ENCODE measurements at regions of chr18 and their contacts with region 1.

Region 1: DNA sequence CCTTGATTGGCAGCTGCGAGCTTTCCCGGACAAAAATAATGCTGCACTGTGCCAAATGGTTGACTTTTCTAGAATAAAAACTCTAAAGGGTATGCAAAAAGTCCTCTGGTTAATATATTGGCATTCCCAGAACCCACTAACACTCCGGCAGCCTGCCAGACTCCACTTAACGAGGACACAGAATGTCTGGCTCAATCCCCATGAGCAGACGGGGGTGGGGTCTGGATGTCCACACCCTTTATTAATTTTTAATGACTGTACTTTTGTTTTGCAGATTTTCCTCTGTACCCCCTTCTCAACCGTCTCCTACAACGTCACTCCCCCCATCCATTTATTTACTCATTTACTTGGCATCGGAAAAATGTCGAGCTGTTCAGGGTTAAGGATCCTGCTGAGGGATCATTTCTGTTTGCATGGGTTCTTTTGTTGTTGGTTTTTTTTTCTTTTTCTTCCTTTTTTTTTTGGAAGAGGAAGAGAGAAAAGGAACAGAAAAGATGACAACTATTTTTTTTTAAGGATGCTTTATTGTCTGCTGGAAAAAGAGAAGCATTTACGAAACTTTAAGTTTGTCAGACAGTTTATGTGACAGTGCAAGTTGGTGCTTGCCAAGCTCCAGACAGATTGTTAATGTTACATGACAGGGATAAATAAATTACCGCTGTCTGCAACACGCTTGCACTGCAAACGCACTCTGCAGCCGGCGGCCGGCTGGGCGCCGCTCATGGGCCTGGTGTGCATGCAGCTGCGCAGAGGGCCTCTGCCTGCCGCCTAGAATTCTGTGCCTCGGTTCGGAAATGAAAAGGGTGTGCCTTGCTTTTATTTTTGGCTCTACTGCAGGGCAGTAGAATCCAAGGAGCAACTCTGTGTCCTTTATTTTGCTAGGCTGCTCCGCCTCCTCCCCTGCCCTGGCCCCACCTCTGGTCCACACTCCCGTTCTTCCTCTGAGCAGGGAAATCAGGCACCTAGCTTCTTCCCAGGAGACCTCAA is 3.6 kb downstream of the LDLRAD4 start:
- DNase-seq: peak; percentile 89
- ATAC-seq: peak; percentile 54

Region 2: DNA sequence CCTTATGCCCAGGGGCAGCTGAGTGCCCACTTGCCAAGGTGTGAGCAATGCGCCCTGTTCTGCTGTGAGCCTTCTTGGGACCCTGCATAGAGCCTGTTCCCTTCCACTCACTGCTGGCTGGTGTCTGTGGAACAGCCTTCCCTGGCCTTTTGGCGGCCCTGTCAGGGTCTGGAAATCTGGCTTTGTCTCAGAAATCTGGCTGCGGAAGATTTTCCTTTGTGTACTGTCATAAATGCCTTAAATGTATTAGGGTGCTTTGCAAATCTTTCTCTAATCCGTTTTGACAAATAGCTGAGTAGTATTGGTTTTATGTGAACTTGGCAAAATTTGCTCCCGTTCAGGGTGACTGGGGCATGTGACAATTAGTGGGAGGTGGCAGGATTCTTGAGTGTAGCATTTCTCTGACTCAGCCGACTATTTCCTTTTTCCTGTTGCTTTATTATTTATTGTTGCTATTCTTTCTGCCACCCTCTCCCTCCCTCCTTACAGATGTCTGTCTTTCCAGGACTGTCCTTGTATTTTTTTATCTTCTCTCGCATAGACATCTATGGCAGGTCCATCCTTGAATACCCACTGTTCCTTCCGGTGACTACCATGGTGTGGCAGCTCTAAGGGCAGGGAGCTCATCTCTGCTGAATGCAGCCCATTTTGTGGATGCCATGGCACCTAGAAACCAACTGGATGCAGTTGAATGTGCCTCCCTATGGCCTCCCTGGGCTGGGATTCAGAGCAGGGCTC is 38.2 kb after region 1 on chr18:
- intact Hi-C with region 1: loop called (anchors 5 kb)
- DNase-seq: no peak
- ATAC-seq: peak; percentile 30

Region 3: GRCh38 chr18:13381944-13382365 is 159.8 kb after region 1 on chr18:
- intact Hi-C with region 1: no loop called
- DNase-seq: peak; percentile 80
- ATAC-seq: peak; percentile 70

Region 4: GRCh38 chr18:13629841-13630715 is 407.9 kb after region 1 on chr18:
- intact Hi-C with region 1: loop called (anchors 10 kb)
- DNase-seq: no peak
- ATAC-seq: peak; percentile 87

Measured in left ventricle myocardium superior (tissue), 1 donor.